Activated CD4-positive, alpha-beta memory T cell treated with anti-CD3 and anti-CD28 coated beads for 36 hours (primary cell): ENCODE measurements at regions of chr16 and their contacts with region 1.

Region 1: GRCh38 chr16:10314811-10315210 is 71.0 kb upstream of the ATF7IP2 start:
- DNase-seq: no peak
- H3K4me3 Mint-ChIP-seq: no peak overlapping the region
- H3K27ac Mint-ChIP-seq: no peak overlapping the region
- H3K4me1 Mint-ChIP-seq: peaks cover 10% of the 10 kb centered on the region
- H3K27me3 Mint-ChIP-seq: no peaks in the 10 kb centered on the region

Region 2: DNA sequence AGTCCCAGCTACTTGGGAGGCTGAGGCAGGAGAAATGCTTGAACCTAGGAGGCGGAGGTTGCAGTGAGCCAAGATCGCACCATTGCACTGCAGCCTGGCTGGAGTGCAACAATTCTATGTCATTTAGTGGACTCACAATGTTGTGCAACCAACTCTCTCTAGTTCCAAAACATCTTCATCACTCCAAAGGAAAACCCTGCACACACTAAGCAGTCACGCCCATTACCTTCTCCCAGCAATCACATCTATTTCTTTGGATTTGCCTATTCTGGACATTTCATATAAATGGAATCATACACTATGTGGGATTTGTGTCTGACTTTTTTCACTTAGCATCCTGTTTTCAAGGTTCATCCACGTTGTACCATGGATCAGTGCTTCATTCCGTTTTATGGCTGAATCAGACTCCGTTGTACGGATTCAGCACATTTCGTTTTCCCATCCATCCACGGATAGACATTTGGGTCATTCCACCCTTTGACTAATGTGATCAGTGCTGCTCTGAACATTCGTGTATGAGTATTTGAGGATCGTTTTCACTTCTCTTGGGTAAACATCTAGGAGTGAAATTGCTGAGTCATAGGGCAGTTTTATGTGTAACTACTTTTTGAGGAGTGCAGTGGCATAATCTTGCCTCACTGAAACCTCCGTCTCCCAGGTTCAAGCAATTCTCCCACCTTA is 310.9 kb after region 1 on chr16:
- CTCF ChIA-PET with region 1: no interaction called
- POLR2A ChIA-PET with region 1: no interaction called
- intact Hi-C with region 1: no loop called
- DNase-seq: no peak
- H3K4me3 Mint-ChIP-seq: no peak overlapping the region
- H3K27ac Mint-ChIP-seq: no peak overlapping the region
- H3K4me1 Mint-ChIP-seq: no peaks in the 10 kb centered on the region
- H3K27me3 Mint-ChIP-seq: no peaks in the 10 kb centered on the region

Region 3: GRCh38 chr16:10708969-10709368 is 394.2 kb after region 1 on chr16:
- CTCF ChIA-PET with region 1: no interaction called
- POLR2A ChIA-PET with region 1: no interaction called
- intact Hi-C with region 1: loop called (anchors 10 kb)
- DNase-seq: no peak
- H3K4me3 Mint-ChIP-seq: no peak overlapping the region
- H3K27ac Mint-ChIP-seq: no peak overlapping the region
- H3K4me1 Mint-ChIP-seq: no peaks in the 10 kb centered on the region
- H3K27me3 Mint-ChIP-seq: peaks cover 5% of the 10 kb centered on the region